Right ventricle myocardium inferior (tissue), 1 donor: ENCODE measurements at regions of chr17 and their contacts with region 1.

Region 1: GRCh38 chr17:19362277-19363113 is at the start of gene B9D1:
- DNase-seq: peak; percentile 97
- ATAC-seq: peak; percentile 95
- total RNA-seq, gene B9D1: 5.3 TPM

Region 2: DNA sequence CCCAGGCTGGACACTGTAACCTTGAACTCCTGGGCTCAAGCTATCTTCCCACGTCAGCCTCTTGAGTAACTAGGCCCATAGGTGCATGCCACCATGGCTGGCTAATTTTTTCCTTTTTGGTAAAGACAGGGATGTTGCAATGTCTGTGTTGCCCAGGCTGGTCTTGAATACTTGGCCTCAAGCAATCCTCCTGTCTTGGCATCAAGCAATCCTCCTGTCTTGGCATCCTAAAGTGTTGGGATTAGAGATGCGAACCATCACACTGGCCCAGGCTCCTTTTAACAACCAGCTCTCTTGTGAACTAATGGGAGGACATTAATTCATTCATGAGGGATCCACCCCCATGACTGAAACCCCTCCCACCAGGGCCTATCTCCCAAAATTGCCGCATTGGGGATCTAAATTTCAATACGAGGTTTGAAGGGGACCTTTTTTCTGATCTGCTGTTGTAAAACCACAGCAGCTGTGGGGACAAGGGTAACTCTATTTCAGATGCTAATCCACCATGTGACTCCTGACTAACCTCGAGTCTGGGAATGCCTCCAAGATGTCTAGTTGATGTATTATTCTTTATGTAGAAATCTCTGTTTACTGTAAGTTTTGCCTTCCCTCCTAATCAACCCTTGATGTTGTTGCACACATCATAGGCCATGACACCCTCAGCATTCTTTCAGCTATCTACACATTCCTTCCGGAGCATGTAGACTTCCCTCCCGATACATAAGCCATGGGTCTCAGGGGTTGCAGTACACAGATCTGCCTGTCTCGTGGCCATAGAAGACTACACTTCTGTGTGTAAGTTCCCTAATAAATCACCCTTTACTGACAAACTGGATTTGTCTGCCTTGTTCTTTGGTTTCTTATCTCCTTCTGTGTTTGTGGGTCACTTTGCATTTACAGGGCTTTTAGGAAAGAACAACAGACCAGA is 86.1 kb after region 1 on chr17:
- intact Hi-C with region 1: loop called (anchors 1 kb)
- DNase-seq: no peak
- ATAC-seq: no peak

Region 3: GRCh38 chr17:19523690-19524089 is 161.2 kb after region 1 on chr17:
- intact Hi-C with region 1: no loop called
- DNase-seq: no peak
- ATAC-seq: no peak

Region 4: DNA sequence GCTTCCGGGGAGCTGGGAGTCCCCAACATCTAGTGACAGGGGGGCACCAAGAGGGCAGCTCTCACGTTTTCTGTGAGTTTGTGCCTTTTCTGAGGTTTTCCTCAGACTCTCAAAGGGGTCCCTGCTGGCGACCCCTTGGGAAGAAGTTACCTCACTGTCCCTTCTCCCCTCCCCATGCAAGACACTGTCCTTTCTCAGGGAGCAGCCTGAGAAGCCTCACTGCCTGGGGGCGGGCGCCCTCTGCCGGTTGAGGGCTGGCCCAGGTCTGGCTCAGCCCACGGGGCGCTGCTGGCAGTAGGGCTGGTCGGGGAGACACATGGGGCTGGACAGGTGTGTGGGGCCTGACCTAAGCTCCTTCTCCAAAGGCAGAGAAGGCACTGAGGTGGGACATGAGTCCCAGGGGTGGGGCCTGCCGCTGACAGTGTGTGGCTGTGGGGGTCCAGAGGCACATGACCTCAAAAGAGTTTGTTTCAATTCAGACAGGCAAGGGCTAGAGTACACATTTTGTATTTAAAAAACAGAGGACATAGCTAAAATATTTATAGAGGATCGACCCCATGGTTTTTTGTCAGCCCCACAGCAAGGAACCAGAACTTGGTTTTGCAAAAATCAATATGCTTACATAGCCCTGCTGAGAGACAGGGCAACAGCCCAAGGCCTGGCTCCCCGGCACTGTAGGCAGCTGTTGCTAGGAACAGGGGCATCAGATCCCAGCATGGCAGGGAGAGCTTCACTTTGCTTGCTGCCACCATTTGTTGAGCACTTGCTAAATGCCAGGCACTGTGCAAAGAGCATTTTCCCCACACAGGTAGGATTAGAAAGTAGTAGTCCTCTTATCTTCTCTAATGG is 404.2 kb after region 1 on chr17:
- intact Hi-C with region 1: loop called (anchors 5 kb)
- DNase-seq: peak; percentile 85
- ATAC-seq: peak; percentile 88